OCI-LY7 (cell line): ENCODE measurements at regions of chr15 and their contacts with region 1.

Region 1: GRCh38 chr15:63157118-63157843 is at the start of gene RPS27L:
- DNase-seq: peak; percentile 93
- H3K4me3 ChIP-seq: peak within 1 kb of the TSS; percentile 86
- H3K27ac ChIP-seq: peak within 1 kb of the TSS; percentile 67
- H3K4me1 ChIP-seq: peaks cover 17% of the 10 kb centered on the region
- CTCF ChIP-seq: no peak
- total RNA-seq, gene RPS27L: 41.3 and 55.5 TPM in 2 replicates

Region 2: DNA sequence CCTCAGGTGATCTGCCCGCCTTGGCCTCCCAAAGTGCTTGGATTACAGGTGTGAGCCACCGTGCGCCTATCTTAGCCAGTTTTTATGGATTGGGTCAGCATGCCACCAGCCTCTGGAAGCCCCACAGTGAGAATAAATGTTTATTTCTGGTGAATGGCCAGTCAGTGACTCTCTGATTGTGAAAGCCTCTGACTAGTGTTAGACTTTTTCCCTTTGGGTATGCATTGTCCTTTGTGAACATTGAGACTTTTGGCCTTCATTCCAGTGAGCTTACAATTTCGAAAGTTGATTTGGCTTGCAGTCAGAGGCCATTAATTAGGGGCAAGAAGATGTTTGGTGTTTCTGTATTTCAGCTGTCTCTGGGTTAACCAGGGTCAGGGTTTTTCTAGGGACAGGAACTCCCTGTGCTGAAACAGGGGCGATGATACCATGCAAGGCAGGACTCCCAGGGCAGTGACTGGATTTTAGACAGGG is 717.7 kb before region 1 on chr15:
- CTCF ChIA-PET with region 1: no interaction called
- POLR2A ChIA-PET with region 1: no interaction called
- intact Hi-C with region 1: no loop called
- DNase-seq: no peak
- H3K4me3 ChIP-seq: no peak overlapping the region
- H3K27ac ChIP-seq: no peak overlapping the region
- H3K4me1 ChIP-seq: no peaks in the 10 kb centered on the region
- CTCF ChIP-seq: no peak

Region 3: GRCh38 chr15:63019539-63020109 is 137.7 kb before region 1 on chr15:
- CTCF ChIA-PET with region 1: no interaction called
- POLR2A ChIA-PET with region 1: no interaction called
- intact Hi-C with region 1: no loop called
- DNase-seq: no peak
- H3K4me3 ChIP-seq: no peak overlapping the region
- H3K27ac ChIP-seq: no peak overlapping the region
- H3K4me1 ChIP-seq: no peaks in the 10 kb centered on the region
- CTCF ChIP-seq: no peak

Region 4: DNA sequence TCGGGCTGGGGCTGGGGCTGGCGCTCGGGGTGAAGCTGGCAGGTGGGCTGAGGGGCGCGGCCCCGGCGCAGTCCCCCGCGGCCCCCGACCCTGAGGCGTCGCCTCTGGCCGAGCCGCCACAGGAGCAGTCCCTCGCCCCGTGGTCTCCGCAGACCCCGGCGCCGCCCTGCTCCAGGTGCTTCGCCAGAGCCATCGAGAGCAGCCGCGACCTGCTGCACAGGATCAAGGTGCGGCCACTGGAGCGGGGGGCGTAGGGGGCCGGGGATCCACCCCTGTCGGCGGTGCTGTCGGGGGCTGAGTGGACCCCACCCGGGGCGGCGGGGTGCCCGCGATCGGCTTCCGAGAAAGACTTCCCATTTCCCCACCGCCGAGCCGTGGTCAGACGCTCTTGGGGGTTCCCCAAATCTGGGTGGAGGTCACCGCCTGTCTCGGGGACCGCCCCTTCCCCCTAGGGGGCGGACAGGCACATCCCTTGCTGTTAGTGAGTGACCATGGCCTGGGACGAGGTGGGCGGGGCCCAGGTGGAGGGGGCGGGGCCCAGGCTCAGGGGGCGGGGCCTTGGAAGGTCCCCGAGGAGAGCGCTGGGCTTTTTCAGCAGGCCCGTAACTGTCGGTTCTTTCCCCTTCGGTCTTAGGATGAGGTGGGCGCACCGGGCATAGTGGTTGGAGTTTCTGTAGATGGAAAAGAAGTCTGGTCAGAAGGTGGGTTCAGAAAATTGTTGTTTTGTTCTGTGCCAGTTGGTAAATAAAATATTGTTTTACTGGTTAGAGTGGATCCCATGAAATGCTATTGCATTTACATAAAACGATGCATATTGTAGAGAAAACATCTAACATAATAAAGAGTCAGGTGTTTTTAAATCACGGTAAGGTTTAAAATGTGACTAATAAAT is 35.0 kb before region 1 on chr15:
- CTCF ChIA-PET with region 1: no interaction called
- POLR2A ChIA-PET with region 1: no interaction called
- intact Hi-C with region 1: loop called (anchors 2 kb)
- DNase-seq: peak; percentile 64
- H3K4me3 ChIP-seq: peak overlapping the region; percentile 94
- H3K27ac ChIP-seq: peak overlapping the region; percentile 20
- H3K4me1 ChIP-seq: no peaks in the 10 kb centered on the region
- CTCF ChIP-seq: peak; percentile 21; the same call in 1 of the 2 replicates

Region 5: GRCh38 chr15:63188926-63189871 is 31.9 kb after region 1 on chr15 and contains the start of gene RAB8B:
- CTCF ChIA-PET with region 1: no interaction called
- POLR2A ChIA-PET with region 1: interaction called, 11 read pairs
- intact Hi-C with region 1: loop called (anchors 1 kb)
- DNase-seq: peak; percentile 96
- H3K4me3 ChIP-seq: peak within 1 kb of the TSS; percentile 79
- H3K27ac ChIP-seq: peak within 1 kb of the TSS; percentile 93
- H3K4me1 ChIP-seq: peaks cover 46% of the 10 kb centered on the region
- CTCF ChIP-seq: no peak
- total RNA-seq, gene RAB8B: 4.9 and 9.5 TPM in 2 replicates

Region 6: GRCh38 chr15:63712828-63713520 is 555.7 kb after region 1 on chr15:
- CTCF ChIA-PET with region 1: no interaction called
- POLR2A ChIA-PET with region 1: no interaction called
- intact Hi-C with region 1: no loop called
- DNase-seq: peak; percentile 64
- H3K4me3 ChIP-seq: peak overlapping the region; percentile 33
- H3K27ac ChIP-seq: peak overlapping the region; percentile 67
- H3K4me1 ChIP-seq: peaks cover 29% of the 10 kb centered on the region
- CTCF ChIP-seq: no peak